H1 (cell line): ENCODE measurements at regions of chr19 and their contacts with region 1.

Region 1: DNA sequence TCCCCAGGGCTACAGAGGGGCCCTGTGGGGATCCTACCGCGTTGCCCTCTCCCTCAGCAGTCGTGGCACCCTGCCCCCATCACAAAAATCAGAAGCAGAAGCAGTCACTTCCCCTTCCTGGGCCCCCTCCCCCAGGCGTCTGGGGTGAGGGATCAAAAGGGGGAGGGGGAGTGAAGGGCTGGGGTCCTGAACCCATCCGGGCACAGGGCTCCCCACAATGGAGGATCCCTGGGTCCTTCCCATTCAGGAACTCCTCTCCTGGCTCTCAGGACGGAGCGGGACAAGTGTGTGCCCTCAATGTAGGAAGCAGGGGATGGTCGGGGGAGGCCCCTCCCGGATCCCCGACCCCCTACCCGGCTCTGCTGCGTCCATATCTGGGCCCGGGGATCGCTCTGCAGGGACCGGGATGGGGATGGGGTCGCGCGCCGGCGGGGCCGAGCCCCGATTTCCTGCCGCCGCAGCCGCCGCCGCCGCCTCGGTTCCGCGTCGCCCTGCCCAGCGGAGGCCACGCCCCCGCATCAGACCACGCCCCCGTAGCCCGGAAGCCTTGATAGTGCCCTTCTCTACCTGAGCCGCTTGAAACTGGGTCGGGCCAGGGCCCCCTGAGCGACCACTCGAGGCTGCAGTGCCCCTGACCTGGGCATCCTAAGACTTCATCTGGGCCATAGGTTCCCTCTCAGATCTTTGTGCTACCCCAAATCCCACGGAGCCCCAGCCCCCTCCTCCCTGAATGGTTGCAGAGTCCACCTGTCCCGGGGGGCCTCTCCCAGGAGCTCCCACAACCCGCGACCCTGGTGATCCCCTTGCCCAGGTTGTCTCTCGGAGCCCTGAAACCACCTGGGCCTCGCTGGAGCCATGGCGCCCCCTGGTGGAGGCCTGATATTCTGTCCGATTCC is at the start of gene GMIP:
- DNase-seq: peak in 1 of 2 experiments; percentile 99
- H3K4me3 ChIP-seq: peak within 1 kb of the TSS; percentile 77 to 85 (median 80)
- H3K27ac ChIP-seq: peak within 1 kb of the TSS; percentile 78
- H3K4me1 ChIP-seq: peaks cover 0 to 3% (median 2%) of the 10 kb centered on the region in 4 experiments; a peak in 2 of 7 replicates
- H3K27me3 ChIP-seq: no peaks in the 10 kb centered on the region
- CTCF ChIP-seq: peak; percentile 74 to 94 (median 87)
- EP300 ChIP-seq: no peak
- POLR2A ChIP-seq: peak in 1 of 2 experiments; percentile 76; a peak in 1 of 3 replicates
- RAD21 ChIP-seq: peak; percentile 85 to 94
- total RNA-seq, gene GMIP: 18.1 and 20.2 TPM in 2 replicates

Region 2: DNA sequence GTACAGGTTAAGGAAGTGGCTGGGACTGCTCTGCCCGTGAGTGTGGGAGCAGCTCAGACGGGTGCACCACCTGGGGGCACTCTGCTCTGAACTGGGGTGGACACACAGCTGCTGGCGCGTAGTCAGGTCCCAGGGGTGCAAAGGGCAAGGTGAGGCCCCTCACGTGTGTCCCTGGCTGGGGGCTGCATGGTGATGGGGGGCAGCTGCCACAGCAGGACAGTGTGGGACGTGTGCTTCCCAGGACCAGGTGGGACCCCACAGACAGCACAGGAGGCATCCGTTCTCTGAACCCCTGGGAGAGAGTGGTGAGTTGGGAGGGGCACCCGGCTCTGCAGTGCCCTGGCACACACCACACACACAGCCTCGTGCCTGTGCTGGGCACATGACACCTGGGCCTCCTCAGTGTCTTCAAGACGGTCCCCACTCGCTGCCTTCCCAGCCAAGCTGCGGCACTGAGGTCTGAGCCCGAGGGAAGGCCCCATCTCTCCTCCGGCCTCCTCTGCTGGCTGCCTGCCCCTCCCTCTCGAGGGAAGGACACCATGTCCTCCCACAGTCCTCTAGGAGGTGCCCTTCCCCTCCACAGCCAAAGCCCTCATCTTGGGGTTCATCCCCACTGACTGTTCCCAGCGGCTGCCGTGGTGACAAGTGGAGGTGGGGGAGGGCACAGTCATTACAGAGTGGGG is 80.6 kb before region 1 on chr19:
- CTCF ChIA-PET with region 1: interaction called, 44 read pairs
- POLR2A ChIA-PET with region 1: no interaction called
- DNase-seq: peak in 1 of 2 experiments; percentile 53
- H3K4me3 ChIP-seq: no peak overlapping the region
- H3K27ac ChIP-seq: no peak overlapping the region
- H3K4me1 ChIP-seq: peaks cover 0 to 4% (median 0%) of the 10 kb centered on the region in 4 experiments; a peak in 2 of 7 replicates
- H3K27me3 ChIP-seq: no peaks in the 10 kb centered on the region
- CTCF ChIP-seq: peak; percentile 48 to 68 (median 62); a peak in 3 of 4 replicates
- EP300 ChIP-seq: no peak
- POLR2A ChIP-seq: no peak
- RAD21 ChIP-seq: peak; percentile 57 to 67

Region 3: GRCh38 chr19:19627621-19628500 is 15.5 kb before region 1 on chr19 and contains the start of gene LPAR2:
- CTCF ChIA-PET with region 1: interaction called, 9 read pairs
- POLR2A ChIA-PET with region 1: interaction called, 12 read pairs
- DNase-seq: peak in 1 of 2 experiments; percentile 89
- H3K4me3 ChIP-seq: peak within 1 kb of the TSS; percentile 69 to 82 (median 74)
- H3K27ac ChIP-seq: peak within 1 kb of the TSS; percentile 72; the same call in 1 of the 2 replicates
- H3K4me1 ChIP-seq: peaks cover 0 to 11% (median 8%) of the 10 kb centered on the region in 4 experiments; a peak in 5 of 7 replicates
- H3K27me3 ChIP-seq: no peaks in the 10 kb centered on the region
- CTCF ChIP-seq: no peak
- EP300 ChIP-seq: no peak
- POLR2A ChIP-seq: peak; percentile 66 to 90
- RAD21 ChIP-seq: no peak
- total RNA-seq, gene LPAR2: 47.1 and 47.6 TPM in 2 replicates

Region 4: DNA sequence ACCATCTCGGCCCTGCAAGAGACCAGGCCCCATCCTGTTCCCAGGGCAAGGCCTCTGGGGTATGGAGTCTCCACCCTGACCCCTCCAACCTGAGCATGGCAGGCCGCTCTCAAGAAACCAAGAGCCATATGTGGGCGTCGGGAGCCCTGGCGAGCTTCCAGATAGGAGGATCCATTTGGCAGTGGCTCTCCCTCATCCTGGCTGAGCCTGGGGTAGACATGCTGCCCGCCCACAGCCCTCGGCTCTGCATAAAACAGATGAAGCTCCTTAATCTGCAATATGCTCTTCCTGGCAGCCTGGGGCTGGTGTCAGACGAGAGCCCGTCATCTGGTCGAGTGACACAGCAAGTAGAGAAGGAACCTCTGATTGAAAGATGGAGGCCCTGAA is 14.0 kb after region 1 on chr19:
- CTCF ChIA-PET with region 1: interaction called, 19 read pairs
- POLR2A ChIA-PET with region 1: interaction called, 13 read pairs
- DNase-seq: no peak
- H3K4me3 ChIP-seq: no peak overlapping the region
- H3K27ac ChIP-seq: no peak overlapping the region
- H3K4me1 ChIP-seq: peaks cover 2 to 8% (median 3%) of the 10 kb centered on the region in 4 experiments; a peak in 5 of 7 replicates
- H3K27me3 ChIP-seq: no peaks in the 10 kb centered on the region
- CTCF ChIP-seq: no peak
- EP300 ChIP-seq: no peak
- POLR2A ChIP-seq: no peak
- RAD21 ChIP-seq: no peak

Region 5: GRCh38 chr19:19805480-19805879 is 162.1 kb after region 1 on chr19:
- CTCF ChIA-PET with region 1: no interaction called
- POLR2A ChIA-PET with region 1: no interaction called
- DNase-seq: no peak
- H3K4me3 ChIP-seq: no peak overlapping the region
- H3K27ac ChIP-seq: no peak overlapping the region
- H3K4me1 ChIP-seq: no peaks in the 10 kb centered on the region
- H3K27me3 ChIP-seq: no peaks in the 10 kb centered on the region
- CTCF ChIP-seq: no peak
- EP300 ChIP-seq: no peak
- POLR2A ChIP-seq: no peak
- RAD21 ChIP-seq: no peak